Esophagus muscularis mucosa (tissue), 4 donors: ENCODE measurements at regions of chr6 and their contacts with region 1.

Region 1: GRCh38 chr6:167141667-167142432 is 15.9 kb downstream of the GPR31 start:
- DNase-seq: no peak
- H3K4me3 ChIP-seq: no peak overlapping the region
- H3K27ac ChIP-seq: no peak overlapping the region
- H3K4me1 ChIP-seq: peaks cover 0 to 5% (median 3%) of the 10 kb centered on the region in 4 donors
- H3K27me3 ChIP-seq: peaks cover 0 to 31% (median 2%) of the 10 kb centered on the region in 4 donors
- CTCF ChIP-seq: peak; percentile 68 to 85 (median 74)
- EP300 ChIP-seq: no peak
- POLR2A ChIP-seq: no peak

Region 2: GRCh38 chr6:166502446-166502845 is 639.4 kb before region 1 on chr6:
- intact Hi-C with region 1: no loop called
- DNase-seq: no peak
- H3K4me3 ChIP-seq: no peak overlapping the region
- H3K27ac ChIP-seq: no peak overlapping the region
- H3K4me1 ChIP-seq: peaks cover 0 to 6% (median 2%) of the 10 kb centered on the region in 4 donors
- H3K27me3 ChIP-seq: no peaks in the 10 kb centered on the region
- CTCF ChIP-seq: no peak
- EP300 ChIP-seq: no peak
- POLR2A ChIP-seq: no peak

Region 3: GRCh38 chr6:166786704-166787293 is 355.1 kb before region 1 on chr6:
- intact Hi-C with region 1: loop called (anchors 5 kb)
- DNase-seq: peak; percentile 50
- H3K4me3 ChIP-seq: no peak overlapping the region
- H3K27ac ChIP-seq: no peak overlapping the region
- H3K4me1 ChIP-seq: no peaks in the 10 kb centered on the region
- H3K27me3 ChIP-seq: no peaks in the 10 kb centered on the region
- CTCF ChIP-seq: peak; percentile 67 to 73 (median 68)
- EP300 ChIP-seq: no peak
- POLR2A ChIP-seq: no peak

Region 4: DNA sequence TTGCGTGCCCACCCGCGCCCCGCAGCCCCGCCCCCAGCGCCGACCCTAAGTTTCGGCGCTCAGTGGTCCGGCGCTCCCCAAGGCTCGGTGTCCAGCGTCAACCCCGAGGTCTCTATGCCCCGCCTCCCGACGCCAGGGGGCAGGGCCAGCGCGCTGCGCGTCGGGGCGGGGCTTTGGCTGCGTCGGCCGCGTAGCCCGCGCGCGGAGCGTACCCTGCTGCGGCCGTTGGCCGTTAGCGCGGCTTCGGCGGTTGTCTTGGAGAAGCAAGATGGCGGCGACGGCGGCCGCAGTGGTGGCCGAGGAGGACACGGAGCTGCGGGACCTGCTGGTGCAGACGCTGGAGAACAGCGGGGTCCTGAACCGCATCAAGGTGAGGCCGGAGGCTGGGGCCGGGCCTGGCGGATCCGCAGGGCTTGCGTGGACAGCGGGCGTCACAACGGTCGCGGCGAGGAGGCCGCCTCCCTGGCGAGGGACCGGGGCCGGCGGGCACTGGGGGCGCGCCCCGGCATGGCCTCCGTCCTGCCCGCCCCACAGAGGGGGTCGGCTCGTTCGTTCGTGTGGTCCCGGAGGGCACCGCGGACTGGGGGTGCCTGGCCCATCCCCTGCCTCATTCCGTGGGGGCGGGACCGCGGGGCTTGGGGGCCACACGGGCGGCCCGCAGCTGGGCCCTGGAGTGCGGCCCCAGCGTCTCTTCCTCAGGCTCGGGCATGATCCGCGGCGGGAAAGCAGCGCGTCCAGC is 142.5 kb before region 1 on chr6 and contains the start of gene CEP43:
- intact Hi-C with region 1: loop called (anchors 5 kb)
- DNase-seq: peak; percentile 97
- H3K4me3 ChIP-seq: peak within 1 kb of the TSS; percentile 87 to 99 (median 95)
- H3K27ac ChIP-seq: peak within 1 kb of the TSS; percentile 71 to 78 (median 72)
- H3K4me1 ChIP-seq: peaks cover 3 to 40% (median 34%) of the 10 kb centered on the region in 4 donors
- H3K27me3 ChIP-seq: no peaks in the 10 kb centered on the region
- CTCF ChIP-seq: peak; percentile 5 to 18 (median 12)
- EP300 ChIP-seq: no peak
- POLR2A ChIP-seq: no peak
- total RNA-seq, gene CEP43: 6.6 to 18.0 (median 8.3) TPM